ENCODE measurements at regions of chr6 and their contacts with region 1.

Region 1: GRCh38 chr6:56359201-56359899 is 112.0 kb upstream of the COL21A1 start:
- DNase-seq: peak in 1 of 2 donors; percentile 43
- ATAC-seq: peak in 1 of 2 donors; percentile 84
- H3K4me3 ChIP-seq: no peak overlapping the region
- H3K27ac ChIP-seq: no peak overlapping the region
- H3K4me1 ChIP-seq: no peaks in the 10 kb centered on the region
- H3K27me3 ChIP-seq: no peaks in the 10 kb centered on the region
- CTCF ChIP-seq: peak; percentile 63 to 79 (median 76)
- POLR2A ChIP-seq: no peak

Region 2: GRCh38 chr6:56131435-56131834 is 227.9 kb before region 1 on chr6:
- in situ Hi-C with region 1: no loop called
- intact Hi-C with region 1: no loop called
- DNase-seq: no peak
- ATAC-seq: no peak
- H3K4me3 ChIP-seq: no peak overlapping the region
- H3K27ac ChIP-seq: no peak overlapping the region
- H3K4me1 ChIP-seq: no peaks in the 10 kb centered on the region
- H3K27me3 ChIP-seq: no peaks in the 10 kb centered on the region
- CTCF ChIP-seq: no peak
- POLR2A ChIP-seq: no peak

Region 3: GRCh38 chr6:56549014-56549413 is 189.7 kb after region 1 on chr6:
- in situ Hi-C with region 1: no loop called
- intact Hi-C with region 1: loop called (anchors 5 kb)
- DNase-seq: no peak
- ATAC-seq: no peak
- H3K4me3 ChIP-seq: peak overlapping the region in 1 of 4 donors; percentile 16
- H3K27ac ChIP-seq: peak overlapping the region in 3 of 4 donors; percentile 1 to 51 (median 49)
- H3K4me1 ChIP-seq: peaks cover 41 to 57% of the 10 kb centered on the region in 2 donors
- H3K27me3 ChIP-seq: no peaks in the 10 kb centered on the region
- CTCF ChIP-seq: peak in 3 of 5 experiments; percentile 24 to 39 (median 30)
- POLR2A ChIP-seq: no peak

Region 4: DNA sequence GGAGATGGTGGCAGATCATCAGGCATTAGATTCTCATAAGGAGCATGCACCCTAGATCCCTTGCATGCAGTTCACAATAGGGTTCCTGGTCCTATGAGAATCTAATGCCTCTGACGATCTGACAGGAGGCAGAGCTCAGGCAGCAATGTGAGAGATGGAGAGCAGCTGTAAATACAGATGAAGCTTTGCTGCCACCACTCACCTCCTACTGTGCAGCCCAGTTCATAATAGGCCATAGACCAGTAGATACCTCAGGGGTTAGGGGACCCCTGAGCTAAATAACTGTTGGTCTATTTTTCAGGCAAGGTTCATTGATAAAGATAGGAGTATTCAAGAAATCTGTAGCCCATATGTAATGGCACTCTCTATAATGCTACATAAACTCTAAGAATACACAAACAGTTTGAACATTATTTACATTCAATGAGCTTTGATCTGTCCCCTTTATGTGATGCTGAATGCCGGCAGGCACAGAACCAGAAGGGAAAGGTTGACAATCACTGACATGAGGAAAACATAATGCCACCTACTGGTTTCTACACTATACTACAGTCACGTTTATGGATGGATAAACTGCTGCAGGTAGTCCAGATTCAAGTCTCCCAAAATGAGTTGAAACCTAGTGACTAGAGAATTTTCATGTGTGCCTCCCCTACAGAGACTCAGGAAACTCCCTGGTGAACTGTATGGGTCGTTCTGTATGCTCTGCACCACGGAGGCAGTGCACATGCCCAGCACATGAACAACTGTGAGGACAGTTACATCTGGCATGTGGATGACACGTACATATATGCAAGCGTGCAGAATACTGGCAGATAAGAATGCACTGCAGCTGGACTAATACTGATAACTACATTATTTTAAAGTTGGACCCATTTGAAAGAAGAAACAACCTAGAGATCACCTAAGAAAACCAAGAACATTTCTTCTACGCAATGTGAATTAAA is 211.3 kb after region 1 on chr6:
- in situ Hi-C with region 1: loop called in 1 of 4 experiments (anchors 10 kb)
- intact Hi-C with region 1: loop called (anchors 2 kb)
- DNase-seq: no peak
- ATAC-seq: peak in 1 of 2 donors; percentile 56
- H3K4me3 ChIP-seq: no peak overlapping the region
- H3K27ac ChIP-seq: no peak overlapping the region
- H3K4me1 ChIP-seq: no peaks in the 10 kb centered on the region
- H3K27me3 ChIP-seq: no peaks in the 10 kb centered on the region
- CTCF ChIP-seq: peak in 4 of 5 experiments; percentile 23 to 58 (median 45)
- POLR2A ChIP-seq: no peak

Region 5: DNA sequence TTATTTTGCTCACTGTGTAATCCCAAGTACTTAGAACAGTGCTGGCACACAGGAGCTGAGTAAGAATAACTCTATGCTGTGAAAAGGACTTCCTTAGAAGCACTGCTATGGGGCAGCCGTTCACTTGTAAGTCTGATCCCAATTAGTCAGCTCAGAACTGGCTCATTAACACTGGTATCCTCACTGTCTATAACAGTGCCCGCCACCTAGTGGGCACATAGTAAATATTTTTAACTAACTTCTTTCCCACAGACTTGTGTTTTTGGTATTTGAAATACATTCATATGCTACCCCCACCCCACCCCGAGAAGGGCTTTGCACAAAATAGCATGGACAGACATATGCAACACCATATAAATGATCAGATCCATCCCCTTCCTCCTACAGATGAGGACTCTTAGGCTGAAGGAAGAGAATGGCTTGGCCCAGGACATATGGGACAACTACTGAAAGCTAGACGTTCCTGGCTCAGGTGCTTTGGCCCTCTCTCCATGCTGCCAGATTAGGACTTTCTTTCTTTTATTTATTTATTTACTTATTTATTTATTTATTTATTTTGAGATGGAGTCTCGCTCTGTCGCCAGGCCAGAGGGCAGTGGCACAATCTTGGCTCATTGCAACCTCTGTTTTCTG is 236.3 kb after region 1 on chr6:
- in situ Hi-C with region 1: loop called (anchors 5 to 10 kb)
- intact Hi-C with region 1: loop called (anchors 1 kb)
- DNase-seq: no peak
- ATAC-seq: no peak
- H3K4me3 ChIP-seq: no peak overlapping the region
- H3K27ac ChIP-seq: no peak overlapping the region
- H3K4me1 ChIP-seq: no peaks in the 10 kb centered on the region
- H3K27me3 ChIP-seq: no peaks in the 10 kb centered on the region
- CTCF ChIP-seq: peak in 4 of 5 experiments; percentile 22 to 62 (median 47)
- POLR2A ChIP-seq: no peak

Region 6: DNA sequence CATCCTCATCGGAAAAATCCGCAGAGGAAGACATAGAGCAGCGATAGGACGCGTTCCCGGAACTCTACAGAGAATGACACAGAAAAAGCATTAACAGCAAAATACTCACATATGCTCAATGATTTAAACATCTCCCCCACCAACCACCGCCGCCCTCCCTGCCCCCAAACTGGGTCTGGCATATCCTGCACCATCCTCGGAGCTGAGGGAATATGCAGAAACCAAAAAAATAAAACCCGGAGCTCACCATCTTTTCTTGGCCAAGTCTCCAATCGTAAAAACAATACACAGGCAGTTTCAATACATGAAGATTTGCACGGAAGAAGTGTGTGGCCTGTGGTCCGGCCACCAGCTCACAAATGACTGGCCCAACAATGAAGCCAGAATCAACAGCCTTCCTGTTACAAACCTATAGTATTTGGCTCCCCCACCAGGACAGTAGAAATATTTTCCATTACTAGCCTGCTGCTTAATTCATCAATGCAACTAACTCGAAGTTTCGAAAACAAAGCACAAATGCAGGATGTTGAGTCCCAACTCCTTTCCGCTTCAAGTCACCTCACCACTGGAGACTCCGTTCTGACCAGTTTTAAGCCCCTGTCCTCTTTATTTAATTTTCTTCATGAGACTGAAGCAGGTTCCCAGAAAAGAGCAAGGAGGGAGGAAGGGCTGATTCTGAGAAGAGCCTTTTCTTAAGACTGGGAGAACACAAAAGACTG is 492.4 kb after region 1 on chr6:
- in situ Hi-C with region 1: loop called (anchors 25 kb)
- intact Hi-C with region 1: loop called (anchors 5 kb)
- DNase-seq: peak in 1 of 2 donors; percentile 49
- ATAC-seq: peak; percentile 86 to 96
- H3K4me3 ChIP-seq: peak overlapping the region; percentile 51 to 52 (median 52)
- H3K27ac ChIP-seq: peak overlapping the region; percentile 14 to 51 (median 30)
- H3K4me1 ChIP-seq: peaks cover 8 to 19% of the 10 kb centered on the region in 2 donors
- H3K27me3 ChIP-seq: no peaks in the 10 kb centered on the region
- CTCF ChIP-seq: peak; percentile 58 to 71 (median 65)
- POLR2A ChIP-seq: no peak

Measured in gastrocnemius medialis (tissue), 4 donors.